GM10248 (cell line): ENCODE measurements at regions of chr10 and their contacts with region 1.

Region 1: GRCh38 chr10:84310470-84310869 is 17.9 kb upstream of the CCSER2 start:
- DNase-seq: no peak
- CTCF ChIP-seq: no peak

Region 2: DNA sequence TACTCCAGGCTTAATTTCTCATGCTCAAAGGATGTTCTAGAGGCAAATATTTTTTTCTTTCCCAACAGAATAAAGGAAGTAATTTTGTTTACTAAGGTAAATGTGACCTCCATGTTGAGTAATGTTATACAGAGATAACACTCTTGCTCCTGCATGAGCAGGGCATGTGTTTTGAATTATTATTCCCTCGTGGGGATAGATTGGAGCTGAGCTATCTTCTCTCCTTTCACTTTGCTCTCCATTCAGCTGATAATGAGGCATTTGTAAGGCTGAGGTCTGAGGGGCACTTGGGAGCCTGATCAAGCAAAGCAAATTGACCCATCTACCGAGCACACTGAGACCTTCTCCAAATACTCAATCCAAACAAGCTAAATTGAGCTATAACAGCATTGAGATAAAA is 221.8 kb before region 1 on chr10:
- CTCF ChIA-PET with region 1: no interaction called
- POLR2A ChIA-PET with region 1: no interaction called
- DNase-seq: no peak
- CTCF ChIP-seq: no peak

Region 3: DNA sequence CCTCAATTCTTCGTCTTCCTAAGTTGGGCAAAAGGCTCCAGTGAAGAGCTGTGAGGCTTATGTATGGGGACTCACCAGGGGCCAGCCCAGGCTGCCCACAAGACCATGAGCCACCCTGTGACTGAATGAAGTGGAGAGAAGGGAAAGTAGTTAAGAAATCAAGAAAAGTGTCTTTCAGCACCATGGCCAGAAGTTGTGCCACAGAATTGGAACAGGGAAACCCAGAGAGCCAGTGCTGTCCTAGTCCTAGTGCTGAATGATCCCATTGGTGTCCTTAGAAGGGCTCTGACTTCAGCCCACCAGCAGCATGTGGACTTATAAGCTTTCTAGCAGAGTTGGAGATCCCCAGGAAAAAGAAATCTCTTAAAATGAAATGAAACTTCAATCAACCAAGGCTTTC is 19.1 kb before region 1 on chr10:
- CTCF ChIA-PET with region 1: interaction called, 11 read pairs
- POLR2A ChIA-PET with region 1: no interaction called
- DNase-seq: no peak
- CTCF ChIP-seq: no peak

Region 4: DNA sequence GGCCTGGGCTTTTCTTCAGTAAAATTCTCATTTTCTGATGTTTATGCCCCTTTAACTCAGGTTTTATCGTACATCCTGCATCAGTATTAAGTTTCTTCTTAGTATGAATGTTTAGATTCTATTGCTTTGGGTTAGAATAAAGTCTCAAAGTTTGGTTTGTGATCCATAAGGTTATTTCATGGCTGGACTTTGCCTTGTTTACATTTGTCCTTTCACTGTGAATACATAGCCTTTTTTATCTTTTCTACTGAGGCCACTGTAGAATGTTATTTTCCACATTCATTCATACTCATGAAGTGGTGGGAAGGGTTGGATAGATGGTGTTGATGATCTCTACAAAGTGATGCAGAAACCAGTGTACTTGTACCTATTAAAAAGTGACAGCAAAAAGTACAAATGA is 77.7 kb after region 1 on chr10:
- CTCF ChIA-PET with region 1: no interaction called
- POLR2A ChIA-PET with region 1: no interaction called
- DNase-seq: no peak
- CTCF ChIP-seq: no peak

Region 5: GRCh38 chr10:84407396-84408180 is 97.1 kb after region 1 on chr10:
- CTCF ChIA-PET with region 1: no interaction called
- POLR2A ChIA-PET with region 1: no interaction called
- DNase-seq: no peak
- CTCF ChIP-seq: no peak